ENCODE measurements at regions of chr11 and their contacts with region 1.

Region 1: DNA sequence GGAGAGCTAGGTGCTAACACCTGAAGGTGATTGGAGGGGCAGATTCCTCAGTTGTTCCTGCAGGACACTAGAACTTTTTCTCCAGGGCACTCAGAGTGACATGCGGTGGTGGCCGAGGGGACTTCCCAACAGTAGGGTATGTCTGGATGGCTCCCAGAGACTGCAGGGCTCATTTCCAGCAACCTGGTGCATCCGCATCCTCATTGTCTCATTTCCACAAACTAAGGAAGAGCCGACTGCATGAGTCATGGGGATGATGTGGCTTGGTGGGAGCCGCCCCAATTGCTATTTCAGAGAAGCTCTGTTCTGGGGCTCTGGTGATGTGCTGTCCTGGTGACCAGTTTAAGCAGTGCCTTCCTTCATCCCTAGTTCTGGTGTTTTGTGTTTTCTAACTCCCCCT is 2.8 kb upstream of the ROBO4 start:
- DNase-seq: peak; percentile 75
- H3K4me3 ChIP-seq: peak overlapping the region in 1 of 3 experiments; percentile 41
- H3K27ac ChIP-seq: peak overlapping the region; percentile 95
- H3K4me1 ChIP-seq: peaks cover 51% of the 10 kb centered on the region
- H3K27me3 ChIP-seq: no peaks in the 10 kb centered on the region
- CTCF ChIP-seq: no peak
- POLR2A ChIP-seq: peak; percentile 67

Region 2: GRCh38 chr11:124859171-124859570 is 41.3 kb before region 1 on chr11:
- CTCF ChIA-PET with region 1: no interaction called
- POLR2A ChIA-PET with region 1: no interaction called
- dilution Hi-C with region 1: no loop called
- intact Hi-C with region 1: no loop called
- DNase-seq: no peak
- H3K4me3 ChIP-seq: no peak overlapping the region
- H3K27ac ChIP-seq: no peak overlapping the region
- H3K4me1 ChIP-seq: peaks cover 6% of the 10 kb centered on the region
- H3K27me3 ChIP-seq: peaks cover 45 to 64% of the 10 kb centered on the region in 2 experiments
- CTCF ChIP-seq: no peak
- POLR2A ChIP-seq: no peak

Region 3: DNA sequence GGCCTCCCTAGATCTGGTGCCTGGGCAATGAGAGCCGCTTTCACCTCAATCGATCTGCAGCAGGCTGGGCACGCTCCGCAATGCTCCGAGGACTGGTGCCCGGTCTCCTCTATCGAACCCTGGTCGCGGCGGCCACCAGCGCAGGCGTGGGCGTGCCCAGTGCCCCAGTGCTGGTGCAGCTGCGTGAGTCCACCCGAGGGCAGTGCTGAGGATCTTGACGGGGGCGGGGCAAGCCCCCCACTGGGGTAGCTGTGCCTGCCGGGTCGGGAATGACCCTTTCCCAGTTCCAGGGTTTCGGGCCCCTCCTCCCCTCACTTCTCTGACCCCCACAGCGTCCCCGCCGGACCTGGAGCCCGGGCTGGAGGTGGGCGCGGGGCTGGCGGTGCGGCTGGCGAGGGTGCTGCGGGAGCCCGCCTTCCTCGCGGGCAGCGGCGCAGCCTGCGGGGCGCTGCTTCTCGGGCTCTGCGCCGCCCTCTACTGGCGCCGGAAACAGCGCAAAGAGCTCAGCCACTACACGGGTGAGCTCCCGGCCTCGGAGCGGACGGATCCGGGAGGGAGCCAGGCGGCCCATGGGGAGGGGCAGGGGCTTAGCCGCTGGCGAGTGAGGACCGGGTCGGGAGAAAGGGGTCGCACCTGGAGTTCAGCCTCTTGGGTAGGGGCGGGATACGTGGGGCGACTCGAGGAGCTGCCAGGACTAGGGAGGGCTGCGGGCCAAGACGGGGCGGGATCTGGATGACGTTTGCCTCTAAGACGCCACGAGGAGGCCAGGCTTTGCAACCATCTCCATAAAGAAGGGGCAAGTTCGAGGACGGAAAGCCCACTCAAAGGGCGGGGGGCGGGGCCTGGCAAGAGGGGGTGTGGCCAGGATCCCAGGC is 24.3 kb before region 1 on chr11:
- CTCF ChIA-PET with region 1: interaction called, 70 read pairs
- POLR2A ChIA-PET with region 1: interaction called, 39 read pairs
- dilution Hi-C with region 1: no loop called
- intact Hi-C with region 1: loop called (anchors 1 kb)
- DNase-seq: peak; percentile 97
- H3K4me3 ChIP-seq: peak overlapping the region; percentile 14 to 49 (median 47)
- H3K27ac ChIP-seq: peak overlapping the region; percentile 65
- H3K4me1 ChIP-seq: peaks cover 21% of the 10 kb centered on the region
- H3K27me3 ChIP-seq: peaks cover 21 to 26% of the 10 kb centered on the region in 2 experiments
- CTCF ChIP-seq: peak; percentile 63 to 74
- POLR2A ChIP-seq: no peak

Region 4: DNA sequence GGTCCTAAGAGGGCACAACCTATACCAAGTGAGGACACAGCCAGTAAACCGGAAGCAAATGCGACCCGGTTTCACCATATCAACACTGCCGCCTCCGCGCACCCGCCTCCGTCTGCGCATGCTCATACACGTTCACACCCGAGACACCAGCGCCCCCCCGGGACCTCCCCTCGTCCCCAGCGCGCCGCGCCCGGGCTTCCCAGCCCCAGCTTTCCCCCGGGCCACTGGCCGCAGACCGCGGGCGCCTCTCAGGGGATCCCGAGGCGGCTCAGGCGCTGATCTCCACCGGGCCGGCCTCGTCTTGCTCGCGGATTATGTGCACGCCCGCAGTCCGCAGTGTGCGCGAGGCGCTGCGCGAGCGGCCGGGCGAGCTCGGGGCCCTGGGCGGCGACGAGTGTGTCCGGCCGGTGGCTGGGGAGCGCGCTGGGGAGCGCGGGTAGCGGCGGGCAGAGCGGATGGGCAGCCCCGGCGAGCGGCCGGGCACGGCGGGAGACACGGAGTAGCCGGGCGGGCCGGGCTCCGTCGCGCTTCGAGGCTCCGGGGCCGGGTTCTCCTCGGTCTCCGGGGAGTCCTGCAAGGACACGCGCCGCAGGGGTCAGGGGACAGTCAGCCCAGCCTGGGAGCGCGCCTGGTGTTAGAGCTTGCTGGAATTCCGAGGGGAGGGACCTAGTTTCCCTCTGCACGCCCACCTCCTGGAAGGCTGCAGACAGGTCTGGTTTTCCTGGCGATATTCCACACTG is 20.6 kb after region 1 on chr11:
- CTCF ChIA-PET with region 1: interaction called, 38 read pairs
- POLR2A ChIA-PET with region 1: interaction called, 6 read pairs
- dilution Hi-C with region 1: no loop called
- intact Hi-C with region 1: loop called (anchors 1 kb)
- DNase-seq: peak; percentile 82
- H3K4me3 ChIP-seq: peak overlapping the region in 2 of 3 experiments; percentile 31 to 39
- H3K27ac ChIP-seq: peak overlapping the region; percentile 22
- H3K4me1 ChIP-seq: peaks cover 9% of the 10 kb centered on the region
- H3K27me3 ChIP-seq: no peaks in the 10 kb centered on the region
- CTCF ChIP-seq: no peak
- POLR2A ChIP-seq: peak; percentile 62

Region 5: GRCh38 chr11:125036933-125037332 is 136.5 kb after region 1 on chr11:
- CTCF ChIA-PET with region 1: no interaction called
- POLR2A ChIA-PET with region 1: no interaction called
- dilution Hi-C with region 1: no loop called
- intact Hi-C with region 1: loop called (anchors 5 kb)
- DNase-seq: peak; percentile 70
- H3K4me3 ChIP-seq: no peak overlapping the region
- H3K27ac ChIP-seq: peak overlapping the region; percentile 78
- H3K4me1 ChIP-seq: peaks cover 8% of the 10 kb centered on the region
- H3K27me3 ChIP-seq: no peaks in the 10 kb centered on the region
- CTCF ChIP-seq: no peak
- POLR2A ChIP-seq: no peak

Region 6: DNA sequence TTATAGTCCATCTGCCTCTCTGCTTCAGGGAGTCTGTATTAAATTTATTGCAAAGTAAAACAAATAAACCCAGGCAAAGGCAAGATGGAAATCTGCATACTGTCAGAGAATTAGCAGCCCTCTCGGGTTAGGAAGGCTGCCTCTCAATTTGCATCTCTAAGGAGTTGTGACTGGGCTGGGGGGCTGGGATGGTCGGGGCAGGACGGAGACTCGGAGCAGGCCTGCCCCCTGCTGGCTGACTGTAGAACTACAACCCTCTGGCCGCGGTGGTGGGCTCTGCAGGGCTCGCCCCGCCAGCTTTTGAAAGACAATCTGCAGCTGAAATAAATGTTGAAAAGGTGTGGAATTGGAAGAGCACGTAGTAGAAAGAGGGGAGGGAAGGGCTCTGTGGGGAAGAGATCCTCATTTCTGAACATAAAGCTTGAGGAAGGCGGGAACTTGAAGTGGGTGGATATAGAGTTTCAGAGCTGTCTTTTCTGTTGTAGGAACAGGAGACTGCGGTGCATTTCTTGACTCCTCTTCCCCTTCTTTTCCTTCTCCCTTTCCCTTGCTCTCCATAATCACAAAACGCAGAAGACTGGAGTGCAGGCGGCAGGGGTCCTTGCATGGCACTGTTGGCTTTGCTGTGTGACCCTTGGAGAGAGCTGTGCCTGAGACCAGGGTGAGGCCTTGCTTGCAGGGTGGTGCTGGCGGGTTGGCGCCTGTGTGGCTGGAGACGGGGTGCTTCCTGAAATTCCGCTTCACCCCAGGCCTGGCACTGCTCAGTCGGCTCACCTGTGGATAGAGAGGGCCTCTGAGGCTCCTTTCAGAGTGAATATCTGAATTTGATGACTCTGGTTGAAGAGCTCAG is 241.4 kb after region 1 on chr11:
- CTCF ChIA-PET with region 1: interaction called, 4 read pairs
- POLR2A ChIA-PET with region 1: no interaction called
- dilution Hi-C with region 1: no loop called
- intact Hi-C with region 1: loop called (anchors 1 kb)
- DNase-seq: peak; percentile 52
- H3K4me3 ChIP-seq: no peak overlapping the region
- H3K27ac ChIP-seq: no peak overlapping the region
- H3K4me1 ChIP-seq: no peaks in the 10 kb centered on the region
- H3K27me3 ChIP-seq: peaks cover 0 to 10% of the 10 kb centered on the region in 2 experiments
- CTCF ChIP-seq: peak; percentile 90 to 95
- POLR2A ChIP-seq: no peak

Region 7: GRCh38 chr11:125592305-125593112 is 692.0 kb after region 1 on chr11 and contains the start of gene STT3A:
- CTCF ChIA-PET with region 1: no interaction called
- POLR2A ChIA-PET with region 1: no interaction called
- dilution Hi-C with region 1: no loop called
- intact Hi-C with region 1: loop called (anchors 10 kb)
- DNase-seq: peak; percentile 100
- H3K4me3 ChIP-seq: peak within 1 kb of the TSS; percentile 63 to 96 (median 79)
- H3K27ac ChIP-seq: peak within 1 kb of the TSS; percentile 79
- H3K4me1 ChIP-seq: peaks cover 17% of the 10 kb centered on the region
- H3K27me3 ChIP-seq: no peaks in the 10 kb centered on the region
- CTCF ChIP-seq: no peak
- POLR2A ChIP-seq: peak; percentile 92
- total RNA-seq, gene STT3A: 216 and 236 TPM in 2 replicates